Ascending aorta (tissue), 2 donors: ENCODE measurements at regions of chr13 and their contacts with region 1.

Region 1: DNA sequence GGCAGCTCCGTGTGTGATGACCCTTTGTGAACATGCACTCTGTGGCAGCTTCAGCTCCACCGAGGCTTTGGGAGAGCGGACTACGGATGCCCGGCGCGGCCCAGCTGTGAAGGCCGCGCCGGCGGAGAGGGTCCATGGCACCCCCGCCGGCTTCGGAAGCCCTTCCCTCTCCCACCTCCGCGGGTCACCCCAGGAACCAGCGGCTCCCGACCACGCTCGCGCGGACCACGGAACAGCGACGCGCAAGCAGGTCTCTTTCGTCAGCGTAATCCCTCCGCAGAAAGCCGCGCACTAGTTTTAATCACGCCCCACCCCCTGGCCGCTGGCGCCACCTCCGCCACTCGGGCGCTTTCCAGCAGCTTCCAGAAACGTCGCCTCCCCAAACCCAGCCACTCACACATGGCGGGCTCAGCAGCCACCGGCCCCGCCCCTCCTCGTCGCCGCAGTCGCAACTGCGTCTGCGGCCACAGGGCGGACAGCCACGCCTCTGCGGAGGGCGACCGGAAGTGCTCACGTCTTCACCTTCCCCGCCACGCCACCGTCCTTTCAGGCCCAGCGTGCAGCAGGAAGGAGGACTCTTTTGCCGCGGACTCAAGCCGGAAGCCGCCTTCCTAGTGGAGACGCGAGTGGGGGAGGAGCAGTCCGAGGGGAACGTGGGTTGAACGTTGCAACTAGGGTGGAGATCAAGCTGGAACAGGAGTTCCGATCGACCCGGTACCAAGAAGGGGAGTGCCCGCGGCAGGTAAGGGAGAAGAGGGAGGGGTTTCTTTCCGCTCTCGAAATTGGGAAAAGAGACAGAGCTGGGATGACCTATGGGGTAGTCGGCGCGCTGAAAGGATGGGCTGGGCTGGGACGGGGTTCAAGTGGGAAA is at the start of gene USPL1:
- DNase-seq: peak; percentile 92 to 98
- H3K4me3 ChIP-seq: peak within 1 kb of the TSS; percentile 77 to 81
- H3K27ac ChIP-seq: peak within 1 kb of the TSS; percentile 99 to 100
- H3K4me1 ChIP-seq: peaks cover 0 to 21% of the 10 kb centered on the region in 2 donors
- H3K27me3 ChIP-seq: no peaks in the 10 kb centered on the region
- CTCF ChIP-seq: peak; percentile 19 to 63 (median 20)
- total RNA-seq, gene USPL1: 4.0 TPM

Region 2: GRCh38 chr13:29435125-29435911 is 1182.2 kb before region 1 on chr13:
- intact Hi-C with region 1: loop called (anchors 5 kb)
- DNase-seq: peak in 1 of 2 donors; percentile 63
- H3K4me3 ChIP-seq: no peak overlapping the region
- H3K27ac ChIP-seq: peak overlapping the region; percentile 88 to 90
- H3K4me1 ChIP-seq: peaks cover 22 to 59% of the 10 kb centered on the region in 2 donors
- H3K27me3 ChIP-seq: no peaks in the 10 kb centered on the region
- CTCF ChIP-seq: no peak

Region 3: GRCh38 chr13:30306762-30307193 is 310.8 kb before region 1 on chr13:
- intact Hi-C with region 1: loop called (anchors 1 kb)
- DNase-seq: peak; percentile 65 to 94
- H3K4me3 ChIP-seq: peak overlapping the region; percentile 91 to 93
- H3K27ac ChIP-seq: peak overlapping the region; percentile 83 to 90
- H3K4me1 ChIP-seq: peaks cover 5 to 11% of the 10 kb centered on the region in 2 donors
- H3K27me3 ChIP-seq: no peaks in the 10 kb centered on the region
- CTCF ChIP-seq: no peak

Region 4: DNA sequence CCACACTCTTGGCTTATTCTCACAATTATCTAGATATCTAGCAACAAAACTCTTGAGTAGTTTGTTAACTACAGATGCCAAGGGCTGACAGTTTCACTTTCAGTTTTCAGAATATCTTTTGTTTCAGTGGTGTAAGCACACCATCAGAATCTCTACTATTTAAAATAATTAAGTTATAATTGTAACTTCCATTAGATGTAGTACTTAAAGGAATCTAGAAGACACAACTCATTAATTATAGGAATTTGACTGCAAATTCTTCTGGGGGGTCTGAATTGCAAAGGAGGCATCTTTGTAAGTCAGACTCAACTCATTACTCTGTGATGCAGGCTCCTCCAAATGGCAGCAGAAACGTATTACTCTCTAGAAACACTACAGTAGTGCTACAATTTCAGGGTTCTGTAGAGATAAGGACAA is 44.7 kb before region 1 on chr13:
- intact Hi-C with region 1: loop called (anchors 5 kb)
- DNase-seq: no peak
- H3K4me3 ChIP-seq: peak overlapping the region; percentile 46 to 48
- H3K27ac ChIP-seq: peak overlapping the region in 1 of 2 donors; percentile 38
- H3K4me1 ChIP-seq: peaks cover 0 to 6% of the 10 kb centered on the region in 2 donors
- H3K27me3 ChIP-seq: no peaks in the 10 kb centered on the region
- CTCF ChIP-seq: peak in 1 of 3 experiments; percentile 43

Region 5: DNA sequence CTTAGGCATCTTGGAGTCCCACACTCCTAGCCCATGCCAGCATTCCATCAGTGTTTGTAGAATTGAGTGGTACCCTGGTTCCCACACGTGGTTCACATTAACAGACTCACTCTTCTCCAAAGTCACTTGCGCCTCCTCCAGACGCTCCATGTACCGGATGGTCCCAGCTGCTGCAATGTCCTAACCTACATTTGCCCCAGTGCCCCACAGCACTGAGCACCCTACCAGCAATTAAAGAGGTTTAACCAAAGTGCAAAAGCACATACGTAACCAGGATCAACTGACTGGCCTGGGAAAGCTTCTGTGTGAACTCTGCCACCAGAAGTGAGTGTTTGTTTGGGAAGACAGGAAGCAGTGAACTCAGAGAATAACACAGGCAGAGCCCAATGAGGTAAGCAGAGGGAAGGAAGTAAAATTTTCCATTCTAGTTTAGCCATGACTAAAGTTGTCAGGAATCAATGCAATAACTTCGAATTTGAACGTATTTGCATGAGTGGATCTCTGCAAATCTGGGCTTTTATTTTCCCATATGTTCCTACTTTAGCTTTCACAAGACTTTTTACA is 281.2 kb after region 1 on chr13:
- intact Hi-C with region 1: loop called (anchors 1 kb)
- DNase-seq: peak; percentile 54 to 94
- H3K4me3 ChIP-seq: peak overlapping the region in 1 of 2 donors; percentile 42
- H3K27ac ChIP-seq: peak overlapping the region; percentile 98 to 99
- H3K4me1 ChIP-seq: peaks cover 24 to 52% of the 10 kb centered on the region in 2 donors
- H3K27me3 ChIP-seq: no peaks in the 10 kb centered on the region
- CTCF ChIP-seq: peak in 1 of 3 experiments; percentile 12

Region 6: DNA sequence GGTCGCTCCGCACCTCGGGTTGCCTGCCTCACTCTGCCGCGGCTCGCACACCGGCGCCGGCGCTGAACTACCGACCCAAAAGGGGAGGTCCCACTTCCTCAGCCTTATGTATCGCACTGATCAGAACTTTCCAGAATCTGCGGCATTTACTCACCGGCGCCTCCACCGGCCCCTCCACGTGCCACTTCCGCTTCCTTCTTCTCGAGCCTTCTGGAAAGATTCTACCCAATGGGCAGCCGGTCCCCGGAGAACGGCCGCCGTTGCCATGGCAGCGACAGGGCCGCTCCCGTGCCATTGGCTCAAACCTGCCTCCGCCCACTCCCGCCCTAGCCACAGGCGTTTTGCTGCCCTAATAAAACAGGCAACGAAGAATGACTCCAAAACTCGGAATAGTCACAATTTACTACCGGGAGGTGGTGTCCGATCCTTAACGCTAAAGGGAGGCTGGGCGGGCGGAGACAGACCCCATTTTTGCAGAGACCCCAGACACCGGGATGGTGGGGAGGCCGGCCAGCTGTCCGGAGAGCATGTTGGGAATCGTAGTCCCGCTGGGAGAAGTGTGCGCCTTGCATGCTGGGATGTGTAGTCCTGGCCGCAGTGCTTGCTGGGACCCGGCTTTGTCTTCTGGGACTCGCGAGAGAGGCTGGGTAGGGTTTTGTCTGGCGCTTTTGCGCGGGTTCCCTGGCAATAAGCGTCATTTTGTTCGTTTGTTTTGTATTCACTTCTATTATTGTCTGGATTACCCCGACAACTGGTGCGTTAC is 544.5 kb after region 1 on chr13 and contains the start of gene HSPH1:
- intact Hi-C with region 1: loop called (anchors 1 kb)
- DNase-seq: peak; percentile 95 to 99
- H3K4me3 ChIP-seq: peak within 1 kb of the TSS; percentile 80 to 91
- H3K27ac ChIP-seq: peak within 1 kb of the TSS; percentile 94 to 95
- H3K4me1 ChIP-seq: peaks cover 0 to 10% of the 10 kb centered on the region in 2 donors
- H3K27me3 ChIP-seq: no peaks in the 10 kb centered on the region
- CTCF ChIP-seq: peak in 2 of 3 experiments; percentile 24 to 26
- total RNA-seq, gene HSPH1: 20.6 TPM

Region 7: DNA sequence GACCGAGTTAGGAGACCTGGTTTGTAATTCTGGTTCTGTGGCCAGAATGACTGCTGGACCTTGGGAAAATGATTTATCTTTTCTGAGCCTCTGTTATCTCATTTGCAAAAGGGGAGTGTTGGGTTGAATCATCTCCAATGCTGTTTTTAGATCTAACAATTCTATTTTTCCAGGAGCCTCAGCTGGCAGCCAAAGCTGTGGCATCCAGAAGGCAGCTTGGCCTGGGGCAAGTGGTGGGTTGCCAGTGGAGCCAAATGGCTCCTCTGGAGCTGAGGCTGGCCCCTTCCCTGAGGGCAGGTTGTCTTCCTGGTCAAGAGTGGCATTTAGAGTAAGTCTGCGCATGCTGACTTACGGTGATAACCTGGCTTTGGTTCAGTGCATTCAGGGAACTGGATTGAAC is 603.5 kb after region 1 on chr13:
- intact Hi-C with region 1: no loop called
- DNase-seq: no peak
- H3K4me3 ChIP-seq: no peak overlapping the region
- H3K27ac ChIP-seq: no peak overlapping the region
- H3K4me1 ChIP-seq: no peaks in the 10 kb centered on the region
- H3K27me3 ChIP-seq: no peaks in the 10 kb centered on the region
- CTCF ChIP-seq: no peak